HCT116 (cell line): ENCODE measurements at regions of chr15 and their contacts with region 1.

Region 1: DNA sequence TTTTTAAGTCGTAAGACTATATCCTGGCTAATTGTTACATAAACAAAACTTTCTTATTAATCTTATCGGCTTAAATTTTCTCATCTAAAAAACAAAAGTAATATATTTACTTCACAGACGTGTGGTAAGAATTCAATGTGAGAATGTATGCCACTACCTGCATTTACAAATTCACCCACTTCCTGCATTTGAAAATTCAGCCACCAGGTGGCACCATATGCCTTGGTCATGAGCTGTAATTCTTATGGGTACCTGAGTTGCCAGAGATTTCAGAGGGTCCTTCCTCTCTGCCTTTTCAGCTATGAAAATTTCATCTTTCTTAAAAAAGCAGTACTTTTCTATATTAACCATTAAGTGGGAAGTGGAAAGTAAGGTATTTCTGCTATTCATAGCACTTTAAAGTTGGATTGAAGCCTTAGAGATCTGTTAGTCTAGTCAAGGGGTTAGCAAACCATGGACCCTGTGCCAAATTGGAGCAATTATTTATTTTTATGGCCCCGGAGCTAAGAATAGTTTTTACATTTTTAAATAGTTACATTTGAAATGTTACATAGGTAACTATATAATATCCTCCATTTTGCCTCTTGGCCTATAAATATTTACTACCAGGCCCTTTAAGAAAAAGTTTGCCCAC is 127.8 kb downstream of the HCN4 start:
- DNase-seq: peak; percentile 61
- ATAC-seq: peak; percentile 75
- H3K4me3 ChIP-seq: no peak overlapping the region
- H3K27ac ChIP-seq: no peak overlapping the region
- H3K4me1 ChIP-seq: no peaks in the 10 kb centered on the region
- H3K27me3 ChIP-seq: no peaks in the 10 kb centered on the region
- CTCF ChIP-seq: peak; percentile 62 to 88 (median 78); a peak in 5 of 6 replicates
- POLR2A ChIP-seq: no peak
- RAD21 ChIP-seq: peak; percentile 70

Region 2: DNA sequence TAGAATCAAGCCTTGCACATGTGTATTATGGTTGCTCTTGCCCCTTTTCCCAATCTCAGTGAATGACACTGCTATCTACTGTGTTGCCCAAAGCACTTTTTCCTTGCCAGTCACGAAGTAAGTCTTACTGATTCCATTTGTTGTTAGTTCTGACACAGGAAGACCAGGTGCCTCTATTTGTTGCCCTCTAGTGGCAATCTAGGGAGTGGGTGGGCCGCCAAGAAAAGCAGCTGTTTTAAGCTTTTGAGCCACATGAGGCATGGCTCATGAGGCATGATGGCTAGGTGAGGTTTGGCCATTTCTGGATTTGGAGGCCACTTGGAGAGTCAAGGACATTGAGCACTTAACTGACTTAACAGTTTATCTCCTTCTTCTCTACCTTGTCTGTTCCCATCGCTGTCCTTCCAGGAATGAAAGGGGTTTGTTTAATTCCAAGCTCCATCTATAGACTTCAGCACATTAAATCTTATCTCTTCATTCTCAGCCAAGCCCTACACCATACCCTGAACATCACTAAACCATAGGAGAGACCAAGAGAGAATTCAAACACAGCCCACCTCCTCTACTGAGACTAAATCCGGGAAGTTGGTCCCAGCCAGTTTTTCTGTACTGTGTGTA is 24.7 kb after region 1 on chr15:
- CTCF ChIA-PET with region 1: interaction called, 31 read pairs
- POLR2A ChIA-PET with region 1: no interaction called
- RAD21 ChIA-PET with region 1: no interaction called
- intact Hi-C with region 1: no loop called
- DNase-seq: peak; percentile 42
- ATAC-seq: peak; percentile 91
- H3K4me3 ChIP-seq: no peak overlapping the region
- H3K27ac ChIP-seq: no peak overlapping the region
- H3K4me1 ChIP-seq: no peaks in the 10 kb centered on the region
- H3K27me3 ChIP-seq: no peaks in the 10 kb centered on the region
- CTCF ChIP-seq: peak; percentile 48 to 94 (median 84); a peak in 5 of 6 replicates
- POLR2A ChIP-seq: no peak
- RAD21 ChIP-seq: peak; percentile 41

Region 3: GRCh38 chr15:73273181-73274002 is 32.4 kb after region 1 on chr15:
- CTCF ChIA-PET with region 1: interaction called, 22 read pairs
- POLR2A ChIA-PET with region 1: no interaction called
- RAD21 ChIA-PET with region 1: no interaction called
- intact Hi-C with region 1: loop called (anchors 1 kb)
- DNase-seq: peak; percentile 15
- ATAC-seq: peak; percentile 97
- H3K4me3 ChIP-seq: no peak overlapping the region
- H3K27ac ChIP-seq: no peak overlapping the region
- H3K4me1 ChIP-seq: no peaks in the 10 kb centered on the region
- H3K27me3 ChIP-seq: no peaks in the 10 kb centered on the region
- CTCF ChIP-seq: peak; percentile 53 to 86 (median 85); a peak in 5 of 6 replicates
- POLR2A ChIP-seq: no peak
- RAD21 ChIP-seq: peak; percentile 66